CD4-positive, alpha-beta T cell (primary cell): ENCODE measurements at regions of chr12 and their contacts with region 1.

Region 1: GRCh38 chr12:116818948-116819832 is 62.1 kb downstream of the HRK start:
- DNase-seq: peak; percentile 83 to 97 (median 88)
- ATAC-seq: peak; percentile 86
- H3K4me3 ChIP-seq: peak overlapping the region; percentile 71
- H3K4me3 Mint-ChIP-seq: peak overlapping the region; percentile 98
- H3K27ac ChIP-seq: peak overlapping the region; percentile 80 to 81
- H3K27ac Mint-ChIP-seq: peak overlapping the region; percentile 89
- H3K4me1 ChIP-seq: peaks cover 16% of the 10 kb centered on the region
- H3K4me1 Mint-ChIP-seq: peaks cover 21% of the 10 kb centered on the region
- H3K27me3 ChIP-seq: no peaks in the 10 kb centered on the region
- H3K27me3 Mint-ChIP-seq: no peaks in the 10 kb centered on the region
- CTCF ChIP-seq: no peak

Region 2: DNA sequence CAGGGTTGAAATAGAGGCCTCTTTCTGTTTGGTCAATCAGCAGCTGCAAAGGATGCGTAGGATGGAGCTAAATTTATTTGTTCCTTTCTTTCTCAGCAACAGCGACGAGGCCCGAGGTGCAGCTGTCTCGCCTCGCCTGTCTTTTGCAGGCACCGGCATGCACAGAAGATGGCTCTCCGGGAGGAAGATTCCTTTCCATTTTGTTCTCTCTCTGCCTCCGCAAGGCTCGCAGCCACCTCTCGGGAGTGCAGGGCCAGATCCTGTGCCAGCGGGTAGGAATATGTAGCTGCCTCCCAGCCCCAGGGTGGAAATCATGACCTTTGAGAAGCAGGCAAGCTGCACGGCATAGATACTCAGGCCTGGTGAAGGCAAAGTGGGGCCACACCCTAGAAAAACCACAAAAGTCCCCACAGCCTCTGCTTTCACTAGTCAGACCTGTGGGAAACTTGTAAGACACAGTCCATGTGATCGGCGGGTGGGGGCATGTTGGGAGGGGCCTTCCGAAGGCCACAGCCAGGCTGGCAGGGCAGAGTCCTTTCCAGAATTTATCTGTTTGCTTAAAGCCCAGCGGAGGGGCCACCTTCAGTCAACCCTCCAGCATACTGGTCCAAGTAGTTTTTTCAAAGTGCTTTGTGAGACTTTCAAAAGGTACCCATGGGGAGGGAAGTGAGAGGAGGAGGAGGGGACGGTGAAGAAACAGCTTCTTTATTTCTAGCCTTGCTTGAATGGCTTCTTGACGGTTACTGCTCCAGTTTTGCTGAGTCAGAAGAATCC is 259.8 kb before region 1 on chr12 and contains the start of gene MAP1LC3B2:
- CTCF ChIA-PET with region 1: no interaction called
- POLR2A ChIA-PET with region 1: no interaction called
- intact Hi-C with region 1: loop called in 1 of 2 experiments (anchors 10 kb)
- DNase-seq: peak; percentile 53 to 92 (median 66)
- ATAC-seq: peak; percentile 79
- H3K4me3 ChIP-seq: peak within 1 kb of the TSS; percentile 43
- H3K4me3 Mint-ChIP-seq: peak within 1 kb of the TSS; percentile 90
- H3K27ac ChIP-seq: peak within 1 kb of the TSS; percentile 59 to 79
- H3K27ac Mint-ChIP-seq: peak within 1 kb of the TSS; percentile 97
- H3K4me1 ChIP-seq: peaks cover 49% of the 10 kb centered on the region
- H3K4me1 Mint-ChIP-seq: peaks cover 61% of the 10 kb centered on the region
- H3K27me3 ChIP-seq: no peaks in the 10 kb centered on the region
- H3K27me3 Mint-ChIP-seq: no peaks in the 10 kb centered on the region
- CTCF ChIP-seq: no peak
- total RNA-seq, gene MAP1LC3B2: 1.5 to 2.1 TPM

Region 3: DNA sequence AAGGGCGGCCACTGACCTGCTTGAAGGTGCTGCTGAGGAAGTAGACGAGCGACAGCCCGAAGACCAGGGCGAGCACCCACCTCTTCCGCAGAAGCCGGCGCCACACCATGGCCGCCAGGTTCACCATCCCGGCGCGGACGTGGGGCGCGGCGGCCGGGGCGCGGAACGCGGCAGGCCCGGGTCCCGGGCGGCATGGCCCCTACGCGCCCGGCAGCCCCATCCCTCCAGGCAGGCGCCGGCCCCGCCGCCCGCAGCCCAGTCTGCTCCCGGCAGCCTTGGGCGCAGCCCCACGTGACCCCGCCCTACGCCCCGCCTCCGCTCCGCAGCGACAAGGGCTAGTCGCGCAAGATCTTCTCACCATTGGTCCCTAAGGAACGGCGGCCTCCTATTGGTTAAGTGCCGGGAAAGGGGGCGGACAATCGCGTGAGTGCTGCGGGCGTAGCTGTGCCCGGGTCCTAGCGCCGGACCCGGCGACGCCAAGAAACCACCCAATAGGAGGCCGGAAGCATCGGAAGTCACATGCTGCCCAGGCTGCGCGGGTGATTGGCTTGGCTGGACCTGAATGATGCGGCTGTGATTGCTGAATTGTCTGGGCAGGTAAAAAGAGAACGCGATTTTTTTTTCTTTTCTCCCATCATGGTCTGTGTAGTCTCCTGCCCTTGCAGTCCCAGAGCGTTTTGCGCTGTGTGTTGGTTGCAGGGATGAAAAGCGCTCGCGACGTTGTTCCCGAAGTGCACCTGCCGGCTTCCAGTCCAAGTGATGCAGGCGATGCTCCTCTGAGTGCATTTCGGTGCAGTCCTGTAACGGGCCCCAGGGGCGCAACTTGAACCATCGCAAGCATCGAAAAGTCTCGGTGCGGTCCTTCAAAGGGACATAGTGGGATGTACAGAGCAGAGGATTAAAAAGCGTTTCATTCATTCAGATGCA is 81.2 kb before region 1 on chr12 and contains the starts of genes RNFT2 and SPRING1:
- CTCF ChIA-PET with region 1: no interaction called
- POLR2A ChIA-PET with region 1: no interaction called
- intact Hi-C with region 1: loop called (anchors 1 to 2 kb)
- DNase-seq: peak; percentile 96 to 100 (median 98)
- ATAC-seq: peak; percentile 96
- H3K4me3 ChIP-seq: peak within 1 kb of the TSS; percentile 87
- H3K4me3 Mint-ChIP-seq: peak within 1 kb of the TSS; percentile 96
- H3K27ac ChIP-seq: peak within 1 kb of the TSS; percentile 27 to 39
- H3K27ac Mint-ChIP-seq: peak within 1 kb of the TSS; percentile 86
- H3K4me1 ChIP-seq: peaks cover 27% of the 10 kb centered on the region
- H3K4me1 Mint-ChIP-seq: peaks cover 35% of the 10 kb centered on the region
- H3K27me3 ChIP-seq: no peaks in the 10 kb centered on the region
- H3K27me3 Mint-ChIP-seq: no peaks in the 10 kb centered on the region
- CTCF ChIP-seq: no peak
- total RNA-seq, gene RNFT2: 4.9 to 6.0 TPM
- total RNA-seq, gene SPRING1: 7.6 to 7.8 TPM

Region 4: DNA sequence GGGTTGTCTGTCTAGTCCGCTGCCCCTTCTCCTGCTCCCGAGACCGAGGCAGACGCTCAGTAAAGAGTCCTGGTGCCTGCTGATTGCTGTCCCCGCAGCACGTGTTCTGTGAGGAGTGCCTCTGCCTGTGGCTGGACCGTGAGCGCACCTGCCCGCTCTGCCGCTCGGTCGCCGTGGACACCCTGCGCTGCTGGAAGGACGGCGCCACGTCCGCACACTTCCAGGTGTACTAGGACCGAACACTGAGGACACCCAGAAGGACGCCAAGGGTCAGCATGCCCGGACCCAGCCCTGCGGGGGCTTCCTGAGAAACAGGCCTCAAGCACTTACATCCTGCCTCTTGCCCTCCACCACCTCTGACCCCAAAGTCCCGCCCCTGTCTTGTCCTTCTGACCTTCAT is 30.0 kb after region 1 on chr12:
- CTCF ChIA-PET with region 1: no interaction called
- POLR2A ChIA-PET with region 1: no interaction called
- intact Hi-C with region 1: no loop called
- DNase-seq: no peak
- ATAC-seq: no peak
- H3K4me3 ChIP-seq: no peak overlapping the region
- H3K4me3 Mint-ChIP-seq: no peak overlapping the region
- H3K27ac ChIP-seq: no peak overlapping the region
- H3K27ac Mint-ChIP-seq: no peak overlapping the region
- H3K4me1 ChIP-seq: no peaks in the 10 kb centered on the region
- H3K4me1 Mint-ChIP-seq: no peaks in the 10 kb centered on the region
- H3K27me3 ChIP-seq: peaks cover 0 to 3% of the 10 kb centered on the region in 2 experiments
- H3K27me3 Mint-ChIP-seq: peaks cover 8% of the 10 kb centered on the region
- CTCF ChIP-seq: no peak

Region 5: GRCh38 chr12:116910645-116911451 is 91.7 kb after region 1 on chr12 and contains the start of gene FBXW8:
- CTCF ChIA-PET with region 1: interaction called, 6 read pairs
- POLR2A ChIA-PET with region 1: no interaction called
- intact Hi-C with region 1: loop called in 1 of 2 experiments (anchors 5 kb)
- DNase-seq: peak; percentile 22 to 67 (median 50)
- ATAC-seq: peak; percentile 84
- H3K4me3 ChIP-seq: peak within 1 kb of the TSS; percentile 63
- H3K4me3 Mint-ChIP-seq: peak within 1 kb of the TSS; percentile 94
- H3K27ac ChIP-seq: no peak within 1 kb of the TSS
- H3K27ac Mint-ChIP-seq: peak within 1 kb of the TSS; percentile 70
- H3K4me1 ChIP-seq: peaks cover 14% of the 10 kb centered on the region
- H3K4me1 Mint-ChIP-seq: peaks cover 34% of the 10 kb centered on the region
- H3K27me3 ChIP-seq: no peaks in the 10 kb centered on the region
- H3K27me3 Mint-ChIP-seq: no peaks in the 10 kb centered on the region
- CTCF ChIP-seq: no peak
- total RNA-seq, gene FBXW8: 6.6 to 7.3 TPM

Region 6: GRCh38 chr12:116924558-116925453 is 105.6 kb after region 1 on chr12:
- CTCF ChIA-PET with region 1: no interaction called
- POLR2A ChIA-PET with region 1: no interaction called
- intact Hi-C with region 1: loop called in 1 of 2 experiments (anchors 2 kb)
- DNase-seq: peak in 13 of 14 experiments; percentile 10 to 94 (median 41)
- ATAC-seq: peak; percentile 92
- H3K4me3 ChIP-seq: no peak overlapping the region
- H3K4me3 Mint-ChIP-seq: peak overlapping the region; percentile 77
- H3K27ac ChIP-seq: peak overlapping the region; percentile 9 to 13
- H3K27ac Mint-ChIP-seq: peak overlapping the region; percentile 72
- H3K4me1 ChIP-seq: peaks cover 41% of the 10 kb centered on the region
- H3K4me1 Mint-ChIP-seq: peaks cover 70% of the 10 kb centered on the region
- H3K27me3 ChIP-seq: no peaks in the 10 kb centered on the region
- H3K27me3 Mint-ChIP-seq: no peaks in the 10 kb centered on the region
- CTCF ChIP-seq: no peak

Region 7: DNA sequence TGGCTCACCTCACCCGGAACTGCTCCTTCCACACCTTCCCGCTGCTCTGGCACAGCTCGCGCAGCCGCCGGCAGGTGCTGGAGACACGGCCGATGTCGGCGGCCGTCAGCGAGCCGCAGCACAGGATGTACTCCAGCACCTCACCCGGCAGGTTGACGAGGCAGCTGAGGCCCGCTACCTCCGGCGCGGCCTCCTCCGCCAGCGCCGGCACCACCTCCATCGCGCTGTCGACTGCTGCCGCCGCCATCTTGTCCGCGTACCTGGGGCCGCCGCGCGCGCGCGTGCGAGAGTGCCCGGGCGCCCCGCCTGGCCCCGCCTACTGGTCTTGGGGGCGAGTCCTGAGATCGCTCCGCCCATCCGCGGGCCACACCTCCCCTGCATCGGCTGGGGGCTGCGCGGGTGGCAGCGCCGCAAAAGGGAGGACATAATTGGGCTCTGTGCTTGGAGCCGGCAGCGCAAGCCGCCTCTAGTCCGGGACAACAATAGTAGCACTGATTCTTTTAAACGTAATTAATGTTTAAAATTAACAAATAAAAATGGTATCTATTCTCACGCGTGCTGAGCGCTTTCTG is 371.1 kb after region 1 on chr12 and contains the start of gene FBXO21:
- CTCF ChIA-PET with region 1: no interaction called
- POLR2A ChIA-PET with region 1: no interaction called
- intact Hi-C with region 1: loop called in 1 of 2 experiments (anchors 5 kb)
- DNase-seq: peak; percentile 89 to 97 (median 94)
- ATAC-seq: peak; percentile 91
- H3K4me3 ChIP-seq: peak within 1 kb of the TSS; percentile 91
- H3K4me3 Mint-ChIP-seq: peak within 1 kb of the TSS; percentile 94
- H3K27ac ChIP-seq: peak within 1 kb of the TSS in 1 of 2 donors; percentile 44
- H3K27ac Mint-ChIP-seq: peak within 1 kb of the TSS; percentile 91
- H3K4me1 ChIP-seq: peaks cover 19% of the 10 kb centered on the region
- H3K4me1 Mint-ChIP-seq: peaks cover 44% of the 10 kb centered on the region
- H3K27me3 ChIP-seq: no peaks in the 10 kb centered on the region
- H3K27me3 Mint-ChIP-seq: no peaks in the 10 kb centered on the region
- CTCF ChIP-seq: no peak
- total RNA-seq, gene FBXO21: 67.7 to 67.9 TPM